ENCODE measurements at regions of chr18 and their contacts with region 1.

Region 1: GRCh38 chr18:62186774-62187542 is at the starts of genes PIGN and RELCH:
- DNase-seq: peak; percentile 98
- H3K4me3 ChIP-seq: peak within 1 kb of the TSS; percentile 85 to 97 (median 91)
- H3K27ac ChIP-seq: peak within 1 kb of the TSS; percentile 79 to 90 (median 85)
- H3K4me1 ChIP-seq: peaks cover 0 to 41% (median 30%) of the 10 kb centered on the region in 4 donors
- H3K27me3 ChIP-seq: no peaks in the 10 kb centered on the region
- CTCF ChIP-seq: no peak
- EP300 ChIP-seq: no peak
- POLR2A ChIP-seq: peak; percentile 77 to 88
- total RNA-seq, gene PIGN: 18.4 to 23.2 (median 19.8) TPM
- total RNA-seq, gene RELCH: 19.3 to 28.8 (median 25.3) TPM

Region 2: GRCh38 chr18:62249478-62250097 is 62.6 kb after region 1 on chr18:
- intact Hi-C with region 1: loop called (anchors 2 kb)
- DNase-seq: peak; percentile 71
- H3K4me3 ChIP-seq: no peak overlapping the region
- H3K27ac ChIP-seq: no peak overlapping the region
- H3K4me1 ChIP-seq: no peaks in the 10 kb centered on the region
- H3K27me3 ChIP-seq: no peaks in the 10 kb centered on the region
- CTCF ChIP-seq: peak in 3 of 4 experiments; percentile 57 to 81 (median 60)
- EP300 ChIP-seq: no peak
- POLR2A ChIP-seq: no peak

Region 3: DNA sequence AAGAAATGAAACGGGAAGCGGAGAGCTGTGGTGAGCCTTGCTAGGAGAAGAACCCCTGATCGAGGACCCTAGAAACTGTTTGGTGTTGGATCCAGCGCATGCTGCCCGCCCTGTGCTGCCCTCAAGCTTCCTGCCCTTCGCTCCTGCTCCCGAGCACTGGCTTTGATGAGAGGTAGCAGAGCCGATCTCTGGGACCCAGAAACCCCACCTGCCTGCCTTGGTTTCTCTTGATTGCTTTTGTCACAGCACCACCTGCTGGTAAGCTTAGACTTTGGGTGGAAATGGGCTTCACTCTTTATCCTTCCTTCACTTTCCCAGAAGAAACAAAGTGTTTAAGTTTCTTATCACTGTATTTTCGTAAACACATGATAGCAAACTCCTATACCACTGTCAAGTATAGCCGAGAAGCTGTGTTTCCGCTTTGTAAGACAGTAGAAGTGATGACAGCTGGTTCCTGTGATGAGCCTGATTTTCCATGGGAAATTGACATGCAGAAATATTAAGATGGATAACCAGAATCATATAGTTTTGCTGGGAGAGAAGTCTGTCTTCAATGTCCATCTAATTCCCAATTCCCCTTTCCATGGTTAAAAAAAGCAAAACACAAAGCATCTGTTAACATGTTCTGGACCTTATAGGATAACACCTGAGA is 795.8 kb after region 1 on chr18:
- intact Hi-C with region 1: loop called (anchors 10 kb)
- DNase-seq: peak; percentile 79
- H3K4me3 ChIP-seq: peak overlapping the region in 3 of 4 donors; percentile 21 to 43 (median 42)
- H3K27ac ChIP-seq: no peak overlapping the region
- H3K4me1 ChIP-seq: peaks cover 0 to 8% (median 6%) of the 10 kb centered on the region in 4 donors
- H3K27me3 ChIP-seq: no peaks in the 10 kb centered on the region
- CTCF ChIP-seq: peak; percentile 67 to 75 (median 70)
- EP300 ChIP-seq: no peak
- POLR2A ChIP-seq: no peak